T-cell (primary cell): ENCODE measurements at regions of chr16 and their contacts with region 1.

Region 1: GRCh38 chr16:29815793-29816693 is at the start of gene PAGR1:
- DNase-seq: peak; percentile 96 to 100 (median 99)
- ATAC-seq: peak; percentile 74 to 80 (median 78)
- H3K4me3 ChIP-seq: peak within 1 kb of the TSS; percentile 71 to 86
- H3K4me3 Mint-ChIP-seq: peak within 1 kb of the TSS; percentile 89 to 94 (median 94)
- H3K27ac ChIP-seq: peak within 1 kb of the TSS; percentile 76
- H3K27ac Mint-ChIP-seq: peak within 1 kb of the TSS; percentile 96 to 97
- H3K4me1 ChIP-seq: peaks cover 25 to 79% of the 10 kb centered on the region in 2 experiments
- H3K4me1 Mint-ChIP-seq: peaks cover 59 to 80% (median 68%) of the 10 kb centered on the region in 3 donors
- H3K27me3 ChIP-seq: peaks cover 0 to 14% of the 10 kb centered on the region in 2 experiments
- H3K27me3 Mint-ChIP-seq: peaks cover 0 to 2% of the 10 kb centered on the region in 2 donors
- total RNA-seq, gene PAGR1: 16.0 to 47.2 (median 40.6) TPM

Region 2: DNA sequence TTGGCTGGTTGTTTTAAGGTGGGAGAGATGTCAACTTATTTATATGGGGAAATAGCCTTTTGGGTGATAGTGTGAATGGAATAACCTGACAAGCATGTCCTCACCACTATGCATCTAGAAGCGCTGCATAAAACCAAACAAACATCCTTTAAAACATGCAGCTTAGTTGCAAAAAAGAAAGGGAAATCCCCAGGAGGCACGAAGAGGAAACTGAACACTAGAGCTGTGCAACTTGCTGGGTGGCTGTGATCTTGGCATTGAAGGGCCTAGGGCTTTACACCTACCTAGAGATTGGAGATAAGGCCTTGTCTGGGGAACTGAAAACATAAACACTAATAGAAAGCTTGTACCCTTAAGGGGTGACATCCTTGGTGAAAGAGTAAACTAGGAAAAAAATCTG is 77.5 kb before region 1 on chr16:
- CTCF ChIA-PET with region 1: interaction called in 1 of 2 experiments, 10 read pairs
- POLR2A ChIA-PET with region 1: interaction called in 1 of 2 experiments, 10 read pairs
- DNase-seq: peak in 33 of 35 experiments; percentile 40 to 89 (median 66)
- ATAC-seq: peak; percentile 89 to 95 (median 90)
- H3K4me3 ChIP-seq: no peak overlapping the region
- H3K4me3 Mint-ChIP-seq: peak overlapping the region; percentile 37 to 73 (median 66)
- H3K27ac ChIP-seq: peak overlapping the region; percentile 70
- H3K27ac Mint-ChIP-seq: peak overlapping the region; percentile 92 to 93
- H3K4me1 ChIP-seq: peaks cover 54 to 72% of the 10 kb centered on the region in 2 experiments
- H3K4me1 Mint-ChIP-seq: peaks cover 82 to 86% (median 85%) of the 10 kb centered on the region in 3 donors
- H3K27me3 ChIP-seq: no peaks in the 10 kb centered on the region
- H3K27me3 Mint-ChIP-seq: no peaks in the 10 kb centered on the region

Region 3: GRCh38 chr16:29745853-29746345 is 70.1 kb before region 1 on chr16 and contains the start of gene C16orf54:
- CTCF ChIA-PET with region 1: interaction called in 1 of 2 experiments, 5 read pairs
- POLR2A ChIA-PET with region 1: interaction called in 1 of 2 experiments, 12 read pairs
- DNase-seq: peak; percentile 86 to 97 (median 94)
- ATAC-seq: peak; percentile 83 to 89 (median 86)
- H3K4me3 ChIP-seq: peak within 1 kb of the TSS; percentile 80 to 94
- H3K4me3 Mint-ChIP-seq: peak within 1 kb of the TSS; percentile 98 to 99 (median 98)
- H3K27ac ChIP-seq: peak within 1 kb of the TSS; percentile 98
- H3K27ac Mint-ChIP-seq: peak within 1 kb of the TSS; percentile 98 to 99
- H3K4me1 ChIP-seq: peaks cover 44 to 74% of the 10 kb centered on the region in 2 experiments
- H3K4me1 Mint-ChIP-seq: peaks cover 64 to 70% (median 65%) of the 10 kb centered on the region in 3 donors
- H3K27me3 ChIP-seq: no peaks in the 10 kb centered on the region
- H3K27me3 Mint-ChIP-seq: peaks cover 0 to 2% of the 10 kb centered on the region in 2 donors
- total RNA-seq, gene C16orf54: 122 to 194 (median 142) TPM

Region 4: GRCh38 chr16:29805378-29806098 is 10.5 kb before region 1 on chr16:
- CTCF ChIA-PET with region 1: interaction called, 4 to 42 read pairs
- POLR2A ChIA-PET with region 1: interaction called in 1 of 2 experiments, 3 read pairs
- DNase-seq: peak; percentile 96 to 99 (median 98)
- ATAC-seq: peak; percentile 64 to 71 (median 68)
- H3K4me3 ChIP-seq: peak overlapping the region; percentile 83 to 88
- H3K4me3 Mint-ChIP-seq: peak overlapping the region; percentile 84 to 100 (median 96)
- H3K27ac ChIP-seq: peak overlapping the region; percentile 90
- H3K27ac Mint-ChIP-seq: peak overlapping the region; percentile 99 to 100
- H3K4me1 ChIP-seq: peaks cover 28 to 49% of the 10 kb centered on the region in 2 experiments
- H3K4me1 Mint-ChIP-seq: peaks cover 43 to 45% (median 45%) of the 10 kb centered on the region in 3 donors
- H3K27me3 ChIP-seq: no peaks in the 10 kb centered on the region
- H3K27me3 Mint-ChIP-seq: no peaks in the 10 kb centered on the region

Region 5: GRCh38 chr16:29873319-29873718 is 57.3 kb after region 1 on chr16:
- CTCF ChIA-PET with region 1: no interaction called
- POLR2A ChIA-PET with region 1: interaction called in 1 of 2 experiments, 12 read pairs
- DNase-seq: no peak
- ATAC-seq: no peak
- H3K4me3 ChIP-seq: no peak overlapping the region
- H3K4me3 Mint-ChIP-seq: no peak overlapping the region
- H3K27ac ChIP-seq: no peak overlapping the region
- H3K27ac Mint-ChIP-seq: no peak overlapping the region
- H3K4me1 ChIP-seq: peaks cover 3 to 21% of the 10 kb centered on the region in 2 experiments
- H3K4me1 Mint-ChIP-seq: peaks cover 13 to 18% (median 18%) of the 10 kb centered on the region in 3 donors
- H3K27me3 ChIP-seq: peaks cover 0 to 37% of the 10 kb centered on the region in 2 experiments
- H3K27me3 Mint-ChIP-seq: peaks cover 10 to 21% of the 10 kb centered on the region in 2 donors